ENCODE measurements at regions of chr17 and their contacts with region 1.

Region 1: GRCh38 chr17:49997791-49998703 is 3.0 kb upstream of the DLX3 start:
- H3K4me3 ChIP-seq: no peak overlapping the region
- H3K27ac ChIP-seq: no peak overlapping the region
- H3K4me1 ChIP-seq: peaks cover 4% of the 10 kb centered on the region
- CTCF ChIP-seq: peak; percentile 95

Region 2: GRCh38 chr17:49567871-49568694 is 430.0 kb before region 1 on chr17:
- CTCF ChIA-PET with region 1: interaction called, 61 read pairs
- POLR2A ChIA-PET with region 1: interaction called, 3 read pairs
- H3K4me3 ChIP-seq: no peak overlapping the region
- H3K27ac ChIP-seq: no peak overlapping the region
- H3K4me1 ChIP-seq: peaks cover 3% of the 10 kb centered on the region
- CTCF ChIP-seq: peak; percentile 97

Region 3: DNA sequence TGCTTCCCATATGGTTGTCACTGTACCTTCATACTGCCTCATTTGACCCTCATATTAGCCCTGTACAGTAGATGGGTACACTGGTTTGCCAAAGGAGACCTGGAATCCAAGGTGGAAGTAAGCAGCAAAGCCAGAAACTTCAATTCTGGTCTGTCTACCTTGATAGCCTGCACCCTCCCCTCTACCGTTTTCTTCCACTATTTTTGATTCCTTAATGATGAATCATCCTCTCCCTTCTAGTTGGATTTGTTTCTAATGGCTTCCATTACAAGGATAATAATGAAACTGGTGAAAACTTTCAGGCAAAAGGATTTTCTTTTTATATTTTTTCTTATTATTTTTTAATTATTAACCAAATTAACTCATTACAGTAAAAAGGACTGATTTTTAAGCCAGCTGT is 167.4 kb before region 1 on chr17:
- CTCF ChIA-PET with region 1: interaction called, 40 read pairs
- POLR2A ChIA-PET with region 1: no interaction called
- H3K4me3 ChIP-seq: no peak overlapping the region
- H3K27ac ChIP-seq: no peak overlapping the region
- H3K4me1 ChIP-seq: no peaks in the 10 kb centered on the region
- CTCF ChIP-seq: no peak

Region 4: GRCh38 chr17:49887086-49888028 is 110.7 kb before region 1 on chr17:
- CTCF ChIA-PET with region 1: interaction called, 73 read pairs
- POLR2A ChIA-PET with region 1: no interaction called
- H3K4me3 ChIP-seq: no peak overlapping the region
- H3K27ac ChIP-seq: no peak overlapping the region
- H3K4me1 ChIP-seq: no peaks in the 10 kb centered on the region
- CTCF ChIP-seq: no peak

Region 5: GRCh38 chr17:49932138-49932723 is 65.8 kb before region 1 on chr17:
- CTCF ChIA-PET with region 1: interaction called, 28 read pairs
- POLR2A ChIA-PET with region 1: no interaction called
- H3K4me3 ChIP-seq: no peak overlapping the region
- H3K27ac ChIP-seq: no peak overlapping the region
- H3K4me1 ChIP-seq: no peaks in the 10 kb centered on the region
- CTCF ChIP-seq: no peak

Region 6: DNA sequence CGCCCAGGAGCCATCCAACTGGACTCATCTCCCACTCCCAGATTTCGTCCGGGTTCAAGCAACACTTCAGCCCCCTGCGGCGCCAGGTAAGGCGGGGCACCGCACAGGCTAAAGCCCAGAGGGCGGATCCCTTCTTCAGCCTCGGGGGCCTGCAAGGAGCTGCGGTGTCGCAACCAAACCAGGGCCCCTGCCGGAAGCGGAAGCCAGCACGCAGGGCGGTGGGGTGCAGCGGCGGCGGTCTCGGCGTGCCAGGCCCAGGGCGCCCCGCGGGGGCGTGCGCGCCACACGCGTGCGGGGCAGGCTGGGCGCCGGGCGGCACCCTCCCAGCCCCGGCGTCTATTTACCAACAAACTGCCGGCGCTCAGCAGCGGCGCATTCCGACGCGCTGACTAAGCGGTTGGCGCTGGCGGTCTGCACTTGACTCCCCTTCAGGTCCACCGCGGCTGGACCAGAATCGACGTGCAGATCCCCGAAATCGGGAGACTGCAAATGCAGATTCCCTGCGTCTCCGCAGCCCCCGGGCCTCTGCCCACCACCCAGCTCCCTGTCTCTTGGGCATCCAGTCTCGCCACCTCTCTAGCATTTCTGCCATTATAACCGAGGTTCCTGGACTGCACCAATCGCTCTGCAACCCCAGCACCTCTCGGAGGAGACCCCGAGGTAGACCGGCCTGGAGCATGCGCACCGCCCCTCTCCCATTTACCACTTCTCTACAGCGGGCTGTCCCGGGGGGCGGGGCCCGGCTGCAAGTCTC is 29.5 kb before region 1 on chr17:
- CTCF ChIA-PET with region 1: interaction called, 24 read pairs
- POLR2A ChIA-PET with region 1: interaction called, 6 read pairs
- H3K4me3 ChIP-seq: peak overlapping the region; percentile 70
- H3K27ac ChIP-seq: peak overlapping the region; percentile 84
- H3K4me1 ChIP-seq: no peaks in the 10 kb centered on the region
- CTCF ChIP-seq: no peak

Region 7: GRCh38 chr17:50020841-50021599 is 23.0 kb after region 1 on chr17:
- CTCF ChIA-PET with region 1: interaction called, 12 read pairs
- POLR2A ChIA-PET with region 1: no interaction called
- H3K4me3 ChIP-seq: no peak overlapping the region
- H3K27ac ChIP-seq: no peak overlapping the region
- H3K4me1 ChIP-seq: no peaks in the 10 kb centered on the region
- CTCF ChIP-seq: no peak

Measured in HEK293 (cell line).